B cell (primary cell): ENCODE measurements at regions of chr10 and their contacts with region 1.

Region 1: GRCh38 chr10:99560277-99561126 is 27.8 kb downstream of the NKX2-3 start:
- DNase-seq: peak; percentile 70
- ATAC-seq: no peak
- H3K4me3 ChIP-seq: no peak overlapping the region
- H3K4me3 Mint-ChIP-seq: no peak overlapping the region
- H3K27ac ChIP-seq: no peak overlapping the region
- H3K27ac Mint-ChIP-seq: peak overlapping the region; percentile 39
- H3K4me1 ChIP-seq: peaks cover 8 to 18% of the 10 kb centered on the region in 2 donors
- H3K4me1 Mint-ChIP-seq: peaks cover 23% of the 10 kb centered on the region
- H3K27me3 ChIP-seq: peaks cover 0 to 5% (median 2%) of the 10 kb centered on the region in 4 experiments
- H3K27me3 Mint-ChIP-seq: peaks cover 5% of the 10 kb centered on the region
- CTCF ChIP-seq: peak; percentile 94

Region 2: GRCh38 chr10:99573790-99574189 is 13.3 kb after region 1 on chr10:
- CTCF ChIA-PET with region 1: interaction called, 14 read pairs
- POLR2A ChIA-PET with region 1: no interaction called
- intact Hi-C with region 1: no loop called
- DNase-seq: no peak
- ATAC-seq: no peak
- H3K4me3 ChIP-seq: no peak overlapping the region
- H3K4me3 Mint-ChIP-seq: no peak overlapping the region
- H3K27ac ChIP-seq: no peak overlapping the region
- H3K27ac Mint-ChIP-seq: no peak overlapping the region
- H3K4me1 ChIP-seq: peaks cover 19 to 23% of the 10 kb centered on the region in 2 donors
- H3K4me1 Mint-ChIP-seq: peaks cover 28% of the 10 kb centered on the region
- H3K27me3 ChIP-seq: no peaks in the 10 kb centered on the region
- H3K27me3 Mint-ChIP-seq: no peaks in the 10 kb centered on the region
- CTCF ChIP-seq: no peak

Region 3: GRCh38 chr10:99595770-99596465 is 35.4 kb after region 1 on chr10:
- CTCF ChIA-PET with region 1: interaction called, 14 read pairs
- POLR2A ChIA-PET with region 1: no interaction called
- intact Hi-C with region 1: no loop called
- DNase-seq: no peak
- ATAC-seq: no peak
- H3K4me3 ChIP-seq: no peak overlapping the region
- H3K4me3 Mint-ChIP-seq: no peak overlapping the region
- H3K27ac ChIP-seq: no peak overlapping the region
- H3K27ac Mint-ChIP-seq: no peak overlapping the region
- H3K4me1 ChIP-seq: peaks cover 13 to 21% of the 10 kb centered on the region in 2 donors
- H3K4me1 Mint-ChIP-seq: peaks cover 18% of the 10 kb centered on the region
- H3K27me3 ChIP-seq: no peaks in the 10 kb centered on the region
- H3K27me3 Mint-ChIP-seq: no peaks in the 10 kb centered on the region
- CTCF ChIP-seq: no peak

Region 4: GRCh38 chr10:99711129-99711719 is 150.7 kb after region 1 on chr10:
- CTCF ChIA-PET with region 1: interaction called, 9 read pairs
- POLR2A ChIA-PET with region 1: no interaction called
- intact Hi-C with region 1: loop called (anchors 1 kb)
- DNase-seq: peak; percentile 65
- ATAC-seq: peak; percentile 51
- H3K4me3 ChIP-seq: no peak overlapping the region
- H3K4me3 Mint-ChIP-seq: no peak overlapping the region
- H3K27ac ChIP-seq: no peak overlapping the region
- H3K27ac Mint-ChIP-seq: no peak overlapping the region
- H3K4me1 ChIP-seq: no peaks in the 10 kb centered on the region
- H3K4me1 Mint-ChIP-seq: no peaks in the 10 kb centered on the region
- H3K27me3 ChIP-seq: no peaks in the 10 kb centered on the region
- H3K27me3 Mint-ChIP-seq: no peaks in the 10 kb centered on the region
- CTCF ChIP-seq: peak; percentile 70